Vagina (tissue), 2 donors: ENCODE measurements at regions of chr22 and their contacts with region 1.

Region 1: GRCh38 chr22:36323182-36323854 is 64.4 kb downstream of the MYH9 start:
- DNase-seq: no peak
- H3K4me3 ChIP-seq: peak overlapping the region in 1 of 2 donors; percentile 11
- H3K27ac ChIP-seq: peak overlapping the region; percentile 97
- H3K4me1 ChIP-seq: peaks cover 56% of the 10 kb centered on the region
- H3K27me3 ChIP-seq: no peaks in the 10 kb centered on the region
- CTCF ChIP-seq: peak in 1 of 3 experiments; percentile 15
- POLR2A ChIP-seq: no peak

Region 2: DNA sequence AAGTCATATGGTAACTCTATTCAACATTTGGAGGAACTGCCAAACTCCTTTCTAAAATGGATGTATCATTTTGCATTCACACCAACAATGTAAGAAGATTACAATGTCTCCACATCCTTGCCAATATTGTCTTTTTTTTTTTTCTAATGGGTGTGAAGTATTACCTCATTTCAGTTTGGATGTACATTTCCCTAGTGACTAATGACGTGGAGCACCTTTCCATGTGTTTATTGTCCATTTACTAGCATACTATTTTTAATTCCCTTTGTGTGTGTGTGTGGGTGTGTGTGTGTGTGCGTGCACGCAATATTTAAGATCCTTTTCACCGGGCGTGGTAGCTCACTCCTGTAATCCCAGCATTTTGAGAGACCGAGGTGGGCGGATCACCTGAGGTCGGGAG is 225.4 kb before region 1 on chr22:
- intact Hi-C with region 1: no loop called
- DNase-seq: no peak
- H3K4me3 ChIP-seq: no peak overlapping the region
- H3K27ac ChIP-seq: no peak overlapping the region
- H3K4me1 ChIP-seq: no peaks in the 10 kb centered on the region
- H3K27me3 ChIP-seq: no peaks in the 10 kb centered on the region
- CTCF ChIP-seq: no peak
- POLR2A ChIP-seq: no peak

Region 3: DNA sequence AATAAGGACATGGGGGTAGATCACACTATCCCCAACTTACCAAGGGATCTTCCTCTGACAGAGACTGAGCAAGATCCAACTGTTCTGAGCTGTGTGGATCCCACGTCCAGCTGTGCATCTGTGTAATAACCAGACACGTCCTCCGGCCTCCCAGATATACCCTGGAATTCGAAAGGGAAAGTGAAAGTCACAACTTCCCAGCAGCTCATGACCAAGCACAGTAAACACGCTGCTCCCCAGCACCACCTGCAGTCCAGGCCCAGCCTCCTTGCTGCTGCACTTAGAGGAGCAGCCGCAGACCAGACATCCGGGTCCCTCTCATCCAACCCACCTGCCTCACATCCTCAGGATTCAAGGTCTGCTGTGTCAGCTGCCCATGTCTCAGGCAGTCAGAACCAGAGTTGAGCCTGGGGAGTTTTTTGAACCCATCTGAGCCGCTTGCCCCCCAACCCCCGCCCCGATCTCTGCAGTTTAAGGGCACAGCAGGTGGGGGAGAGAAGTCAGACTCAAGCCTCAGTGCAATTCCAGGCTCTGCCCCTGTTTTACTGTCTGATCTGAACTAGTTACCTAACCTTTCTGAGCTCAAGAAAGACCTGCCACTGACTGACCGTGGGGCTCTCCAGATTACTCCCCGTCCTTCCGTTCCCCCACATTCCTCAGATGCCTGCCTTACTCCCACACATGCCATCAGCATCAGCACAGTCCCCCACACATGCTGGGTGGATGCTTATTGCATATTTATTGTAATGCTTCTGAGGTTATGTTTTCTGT is 83.7 kb before region 1 on chr22 and contains the start of gene APOL2:
- intact Hi-C with region 1: no loop called
- DNase-seq: peak; percentile 96 to 97
- H3K4me3 ChIP-seq: peak within 1 kb of the TSS; percentile 56 to 73
- H3K27ac ChIP-seq: peak within 1 kb of the TSS; percentile 93
- H3K4me1 ChIP-seq: peaks cover 56% of the 10 kb centered on the region
- H3K27me3 ChIP-seq: no peaks in the 10 kb centered on the region
- CTCF ChIP-seq: peak in 2 of 3 experiments; percentile 64 to 66
- POLR2A ChIP-seq: peak in 1 of 2 donors; percentile 87
- total RNA-seq, gene APOL2: 63.8 TPM

Region 4: GRCh38 chr22:36267896-36268485 is 55.3 kb before region 1 on chr22:
- intact Hi-C with region 1: no loop called
- DNase-seq: no peak
- H3K4me3 ChIP-seq: no peak overlapping the region
- H3K27ac ChIP-seq: no peak overlapping the region
- H3K4me1 ChIP-seq: no peaks in the 10 kb centered on the region
- H3K27me3 ChIP-seq: no peaks in the 10 kb centered on the region
- CTCF ChIP-seq: no peak
- POLR2A ChIP-seq: no peak

Region 5: GRCh38 chr22:36374603-36375024 is 51.3 kb after region 1 on chr22:
- intact Hi-C with region 1: loop called (anchors 5 kb)
- DNase-seq: no peak
- H3K4me3 ChIP-seq: no peak overlapping the region
- H3K27ac ChIP-seq: peak overlapping the region; percentile 93
- H3K4me1 ChIP-seq: peaks cover 100% of the 10 kb centered on the region
- H3K27me3 ChIP-seq: no peaks in the 10 kb centered on the region
- CTCF ChIP-seq: no peak
- POLR2A ChIP-seq: no peak